ENCODE measurements at regions of chr7 and their contacts with region 1.

Region 1: GRCh38 chr7:70698219-70698832 is 433.6 kb upstream of the GALNT17 start:
- DNase-seq: no peak
- ATAC-seq: no peak

Region 2: DNA sequence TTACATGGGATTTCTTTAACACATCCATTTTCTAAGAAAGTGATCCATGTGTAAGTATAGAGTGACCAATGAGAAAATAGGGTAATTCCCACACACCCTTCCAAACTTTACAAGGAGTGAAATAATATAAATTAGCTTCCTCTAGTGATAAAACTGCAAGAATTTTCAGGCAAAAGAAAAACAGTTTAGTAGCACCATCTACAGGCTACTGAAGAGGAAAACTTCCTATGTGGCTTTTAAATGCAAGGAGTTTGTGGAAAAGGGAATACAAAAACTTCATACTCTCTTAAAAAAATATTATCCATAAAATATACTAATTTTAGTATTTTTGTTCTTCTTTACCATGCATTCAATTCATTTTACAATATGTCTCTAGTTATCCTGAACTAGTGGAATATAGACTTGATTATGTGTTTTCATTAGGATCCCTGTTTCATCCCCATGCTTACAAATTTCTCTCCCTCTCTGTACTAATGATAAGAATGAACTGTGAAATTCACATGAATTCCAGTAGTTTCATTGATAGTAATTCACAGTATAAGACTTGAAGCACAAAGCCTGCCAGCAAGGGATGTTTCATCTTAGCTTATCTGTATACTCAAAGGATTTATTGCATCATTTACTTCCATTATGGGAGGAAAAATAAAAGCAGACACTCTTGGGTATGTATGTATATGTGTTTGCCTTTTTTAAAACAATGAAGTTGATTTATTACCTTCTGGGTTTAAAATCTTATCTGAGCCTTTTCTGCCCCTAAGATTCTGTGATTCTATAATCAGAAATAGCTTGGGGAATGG is 657.2 kb before region 1 on chr7:
- intact Hi-C with region 1: loop called (anchors 5 kb)
- DNase-seq: no peak
- ATAC-seq: peak in 1 of 2 donors; percentile 14

Region 3: DNA sequence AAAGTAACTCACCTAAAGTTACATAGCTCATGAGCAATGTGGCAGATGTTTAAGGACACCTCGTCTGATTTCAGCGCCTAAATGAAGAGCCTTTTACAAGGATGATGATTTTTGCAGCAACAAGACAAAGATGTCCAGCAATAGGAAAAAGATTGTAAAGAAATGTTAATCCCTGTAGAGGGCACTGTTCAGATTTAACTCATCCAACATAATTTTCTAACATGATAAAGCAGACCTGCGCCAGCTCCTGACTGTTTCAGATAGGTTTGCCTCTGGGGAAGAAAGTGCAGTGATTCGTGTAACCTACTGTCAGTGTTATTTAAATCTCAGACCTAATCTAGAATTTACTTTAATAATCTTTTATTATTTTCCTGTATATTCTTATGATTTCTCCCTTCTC is 504.8 kb before region 1 on chr7:
- intact Hi-C with region 1: loop called in 1 of 2 experiments (anchors 5 kb)
- DNase-seq: no peak
- ATAC-seq: peak in 1 of 2 donors; percentile 39

Region 4: DNA sequence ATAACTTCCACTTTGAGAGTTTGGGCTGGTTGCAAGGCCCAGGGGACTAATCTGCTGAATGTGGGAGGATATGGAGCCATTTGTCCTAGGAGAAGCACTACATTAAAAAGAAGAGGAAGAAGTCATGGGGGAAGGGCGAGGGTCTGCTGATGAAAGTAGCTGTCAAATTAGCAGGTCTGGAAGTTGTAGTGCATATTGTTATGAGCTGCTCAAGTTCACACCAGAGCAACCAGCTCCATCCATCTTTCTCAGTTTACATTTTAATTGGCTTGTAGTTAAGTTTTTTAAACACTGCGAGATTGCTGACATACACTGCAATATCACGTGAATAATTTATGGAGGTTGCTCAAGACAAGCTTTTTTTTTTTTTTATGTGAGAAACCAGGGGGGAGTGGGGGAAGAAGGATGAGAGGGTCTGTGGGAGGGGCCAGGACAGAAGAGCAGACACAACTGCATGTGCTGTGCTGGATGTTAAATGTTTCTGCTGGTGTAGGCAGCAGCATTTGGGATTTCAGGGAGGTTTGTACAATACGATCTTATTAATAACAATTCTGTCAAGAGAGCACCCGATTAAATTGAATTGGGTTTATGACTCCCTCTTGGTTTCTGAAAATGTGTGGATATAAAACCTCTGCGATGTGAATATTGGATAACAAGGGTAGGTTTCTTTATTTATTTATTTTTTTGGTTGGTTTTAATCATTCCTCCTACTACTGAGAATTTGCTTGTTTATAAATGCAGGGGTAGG is 325.4 kb before region 1 on chr7:
- intact Hi-C with region 1: no loop called
- DNase-seq: no peak
- ATAC-seq: no peak